Thyroid gland (tissue), 4 donors: ENCODE measurements at regions of chr15 and their contacts with region 1.

Region 1: DNA sequence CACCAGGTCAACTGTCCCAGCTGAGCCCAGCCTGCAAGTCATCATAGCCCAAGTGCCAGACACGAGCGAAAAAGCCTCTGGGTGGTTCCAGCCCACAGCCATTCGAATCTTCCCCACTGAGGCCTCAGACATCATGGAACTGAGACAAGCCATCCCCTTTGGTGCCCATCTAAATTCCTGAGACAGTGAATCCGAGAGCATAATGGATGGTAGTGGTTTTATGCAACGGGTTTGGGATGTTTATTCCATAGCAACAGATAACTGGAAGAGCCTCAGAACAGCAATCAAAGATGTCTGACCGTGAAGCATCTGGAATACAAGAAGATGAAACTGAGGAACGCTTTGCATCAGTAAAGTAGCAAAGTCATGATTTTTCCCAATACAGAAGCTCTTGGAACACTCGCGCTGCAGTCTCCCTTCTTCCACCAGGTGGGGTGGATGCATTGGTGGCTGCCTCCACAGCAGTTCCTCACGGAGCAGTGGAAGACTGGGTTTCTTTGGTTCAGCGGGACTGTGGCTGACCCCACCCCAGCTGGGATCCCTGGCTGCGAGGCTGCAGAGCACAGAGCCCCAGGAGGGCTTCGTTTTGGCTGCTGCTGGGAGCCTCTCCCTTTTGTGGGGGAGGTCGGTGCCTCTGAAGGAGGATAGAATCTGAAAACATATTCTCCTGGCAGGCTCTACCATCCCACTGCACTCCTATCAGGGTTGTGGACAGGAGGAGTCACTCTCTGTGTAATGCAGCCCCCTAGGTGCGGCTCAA is 26.4 kb upstream of the PDE8A start:
- DNase-seq: peak; percentile 73 to 77
- H3K4me3 ChIP-seq: peak overlapping the region in 1 of 3 donors; percentile 6
- H3K27ac ChIP-seq: no peak overlapping the region
- H3K4me1 ChIP-seq: peaks cover 3 to 5% of the 10 kb centered on the region in 2 donors
- H3K27me3 ChIP-seq: no peaks in the 10 kb centered on the region
- CTCF ChIP-seq: peak; percentile 53 to 85 (median 75)
- POLR2A ChIP-seq: no peak

Region 2: DNA sequence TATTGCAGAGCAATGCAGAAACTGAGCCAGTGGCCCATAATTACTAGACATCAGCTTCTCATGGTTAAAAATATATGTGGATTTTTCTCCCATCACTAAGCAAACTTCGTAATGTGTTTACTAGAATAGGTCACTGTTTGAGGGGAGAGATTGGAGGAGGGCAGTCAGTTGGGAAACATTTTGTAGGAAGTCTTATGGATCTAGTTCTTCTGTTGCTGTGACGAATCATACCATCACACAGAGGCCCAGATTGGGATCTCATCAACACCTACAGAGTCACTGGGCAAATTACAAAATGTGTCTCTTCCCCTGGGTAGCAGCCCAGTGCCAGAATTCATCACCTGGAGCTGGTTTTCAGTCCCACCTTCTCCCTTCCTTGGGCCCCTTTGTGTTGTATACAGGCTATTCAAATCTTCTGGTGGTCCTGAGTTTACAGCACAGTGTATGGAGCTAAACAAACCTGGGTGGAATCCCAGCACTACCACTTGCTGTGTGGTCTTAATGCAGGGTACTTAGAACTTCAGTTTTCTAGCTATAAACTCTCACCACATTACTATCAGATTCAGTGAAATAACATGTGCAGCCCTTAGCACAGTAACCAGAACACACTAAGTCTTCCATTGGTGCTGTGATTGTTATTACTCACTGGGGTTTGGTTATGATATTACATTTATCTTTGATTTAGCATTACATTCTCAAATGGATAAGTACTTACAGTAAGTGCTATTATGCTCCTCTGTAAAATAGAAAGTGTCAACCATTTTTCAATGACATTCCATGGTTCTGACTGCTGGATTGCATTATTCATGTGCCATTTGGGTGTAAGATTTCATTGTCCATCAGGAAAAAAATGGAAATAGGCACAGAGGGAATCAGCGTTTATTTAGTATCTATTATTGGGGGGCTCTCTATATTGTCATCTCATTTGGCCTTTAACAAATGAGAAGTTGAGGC is 108.1 kb after region 1 on chr15:
- intact Hi-C with region 1: no loop called
- DNase-seq: no peak
- H3K4me3 ChIP-seq: no peak overlapping the region
- H3K27ac ChIP-seq: no peak overlapping the region
- H3K4me1 ChIP-seq: no peaks in the 10 kb centered on the region
- H3K27me3 ChIP-seq: no peaks in the 10 kb centered on the region
- CTCF ChIP-seq: no peak
- POLR2A ChIP-seq: no peak

Region 3: DNA sequence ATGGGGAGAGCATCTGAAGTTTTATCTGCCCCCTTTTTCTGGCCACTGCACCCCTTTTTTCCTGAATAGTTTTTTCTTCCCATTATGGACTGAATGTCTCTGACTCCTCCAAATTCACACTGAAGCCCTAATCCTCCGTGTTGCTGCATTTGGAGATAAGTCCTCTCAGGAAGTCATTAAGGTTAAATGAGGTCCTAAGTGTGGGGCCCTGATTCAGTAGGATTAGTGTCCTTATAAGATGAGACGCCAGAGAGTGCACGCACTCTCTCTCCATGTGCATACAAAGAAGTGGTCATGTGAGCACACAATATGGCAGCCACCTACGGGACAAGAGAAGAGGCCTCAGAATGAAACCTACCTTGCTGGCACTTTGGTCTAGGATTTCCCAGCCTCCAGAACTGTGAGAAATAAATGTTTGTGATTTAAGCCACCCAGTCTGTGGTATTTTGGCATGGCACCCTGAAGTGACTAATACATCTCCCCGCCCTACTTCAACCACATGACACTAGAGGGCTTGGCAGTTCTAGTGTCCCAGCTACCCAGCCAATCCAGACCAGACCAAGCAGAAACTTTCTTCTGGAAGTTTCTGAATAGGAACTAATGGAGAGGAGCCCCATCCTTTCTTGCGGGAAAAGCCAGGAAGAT is 217.7 kb after region 1 on chr15:
- intact Hi-C with region 1: loop called (anchors 10 kb)
- DNase-seq: no peak
- H3K4me3 ChIP-seq: no peak overlapping the region
- H3K27ac ChIP-seq: no peak overlapping the region
- H3K4me1 ChIP-seq: peaks cover 0 to 9% of the 10 kb centered on the region in 2 donors
- H3K27me3 ChIP-seq: no peaks in the 10 kb centered on the region
- CTCF ChIP-seq: no peak
- POLR2A ChIP-seq: no peak